WTC11 (cell line): ENCODE measurements at regions of chr2 and their contacts with region 1.

Region 1: GRCh38 chr2:234544659-234545611 is 48.1 kb upstream of the ARL4C start:
- DNase-seq: peak; percentile 88
- ATAC-seq: peak; percentile 77
- H3K4me3 Mint-ChIP-seq: peak overlapping the region; percentile 54
- H3K27ac Mint-ChIP-seq: no peak overlapping the region
- H3K4me1 Mint-ChIP-seq: peaks cover 48% of the 10 kb centered on the region
- H3K27me3 Mint-ChIP-seq: peaks cover 17% of the 10 kb centered on the region
- CTCF ChIP-seq: peak; percentile 94

Region 2: DNA sequence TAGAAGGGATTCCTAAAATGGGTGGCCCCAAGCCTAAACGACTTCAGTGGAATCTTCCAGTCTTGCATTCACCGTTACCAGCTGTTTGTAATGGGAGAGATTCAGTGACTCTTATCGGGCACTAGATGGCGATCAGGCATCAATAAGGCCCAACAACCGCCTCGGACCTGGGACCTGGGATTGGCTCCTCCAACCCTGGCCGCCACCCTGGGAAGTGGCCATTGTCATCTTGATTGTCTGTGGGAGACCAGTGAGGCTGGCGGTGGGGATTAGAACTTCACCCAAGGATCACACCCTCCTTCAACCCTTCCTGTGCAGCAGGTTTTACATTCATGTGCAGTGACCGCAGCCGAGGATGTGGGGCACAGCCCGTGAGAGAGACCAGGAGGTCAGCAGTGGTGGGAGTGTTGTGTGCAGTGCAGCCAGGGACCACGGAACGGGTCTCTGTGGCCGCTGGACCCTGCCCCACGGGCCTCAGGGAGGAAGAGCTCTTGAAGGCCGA is 409.2 kb before region 1 on chr2:
- CTCF ChIA-PET with region 1: interaction called, 15 read pairs
- POLR2A ChIA-PET with region 1: no interaction called
- DNase-seq: peak; percentile 76
- ATAC-seq: peak; percentile 98
- H3K4me3 Mint-ChIP-seq: no peak overlapping the region
- H3K27ac Mint-ChIP-seq: no peak overlapping the region
- H3K4me1 Mint-ChIP-seq: peaks cover 16% of the 10 kb centered on the region
- H3K27me3 Mint-ChIP-seq: no peaks in the 10 kb centered on the region; the same call in 1 of the 2 replicates
- CTCF ChIP-seq: peak; percentile 40

Region 3: GRCh38 chr2:234500394-234501006 is 44.4 kb before region 1 on chr2:
- CTCF ChIA-PET with region 1: interaction called, 12 read pairs
- POLR2A ChIA-PET with region 1: no interaction called
- DNase-seq: peak; percentile 46
- ATAC-seq: peak; percentile 24
- H3K4me3 Mint-ChIP-seq: no peak overlapping the region
- H3K27ac Mint-ChIP-seq: no peak overlapping the region
- H3K4me1 Mint-ChIP-seq: peaks cover 23% of the 10 kb centered on the region
- H3K27me3 Mint-ChIP-seq: peaks cover 25% of the 10 kb centered on the region
- CTCF ChIP-seq: no peak

Region 4: GRCh38 chr2:234533626-234534025 is 11.3 kb before region 1 on chr2:
- CTCF ChIA-PET with region 1: interaction called, 11 read pairs
- POLR2A ChIA-PET with region 1: no interaction called
- DNase-seq: no peak
- ATAC-seq: no peak
- H3K4me3 Mint-ChIP-seq: no peak overlapping the region
- H3K27ac Mint-ChIP-seq: no peak overlapping the region
- H3K4me1 Mint-ChIP-seq: peaks cover 19% of the 10 kb centered on the region
- H3K27me3 Mint-ChIP-seq: no peaks in the 10 kb centered on the region
- CTCF ChIP-seq: no peak

Region 5: DNA sequence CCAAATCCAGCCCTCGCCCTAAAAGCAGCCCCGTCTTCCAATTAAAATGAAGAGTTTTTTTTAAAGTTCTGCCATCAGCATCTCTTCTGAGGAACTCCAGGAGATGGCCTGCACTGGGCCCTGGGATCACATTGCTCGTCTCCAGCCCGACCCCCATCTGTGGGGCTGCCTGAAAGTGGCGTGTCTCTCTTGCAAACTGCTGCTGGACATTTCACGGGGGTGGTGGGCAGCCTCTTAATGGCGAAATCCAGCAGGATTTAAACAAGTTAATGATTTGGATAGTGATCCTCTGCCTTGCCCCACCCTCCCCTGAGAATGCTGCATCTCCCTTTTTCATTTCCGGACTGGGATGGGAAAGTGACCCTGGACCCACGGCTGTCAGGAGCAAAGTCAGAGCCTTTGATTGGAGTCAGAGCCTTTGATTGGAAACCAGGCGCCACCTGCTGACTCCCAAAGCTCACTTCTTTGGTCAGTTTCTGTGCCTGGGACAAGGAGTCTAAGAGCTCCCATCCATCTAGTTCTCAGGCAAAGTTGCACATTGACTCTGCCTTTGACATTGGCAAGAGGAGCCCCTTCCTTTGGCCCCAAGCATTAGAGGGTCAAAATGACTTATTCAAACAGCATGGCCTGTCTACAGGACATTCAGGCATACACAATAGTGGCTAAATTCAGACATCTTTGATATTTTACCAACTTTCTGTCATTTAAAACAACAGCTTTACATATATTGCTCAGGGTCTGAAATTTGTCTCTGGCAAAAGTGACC is 562.1 kb after region 1 on chr2:
- CTCF ChIA-PET with region 1: interaction called, 16 read pairs
- POLR2A ChIA-PET with region 1: no interaction called
- DNase-seq: peak; percentile 69
- ATAC-seq: peak; percentile 76
- H3K4me3 Mint-ChIP-seq: no peak overlapping the region
- H3K27ac Mint-ChIP-seq: no peak overlapping the region
- H3K4me1 Mint-ChIP-seq: peaks cover 8% of the 10 kb centered on the region
- H3K27me3 Mint-ChIP-seq: no peaks in the 10 kb centered on the region
- CTCF ChIP-seq: no peak

Region 6: DNA sequence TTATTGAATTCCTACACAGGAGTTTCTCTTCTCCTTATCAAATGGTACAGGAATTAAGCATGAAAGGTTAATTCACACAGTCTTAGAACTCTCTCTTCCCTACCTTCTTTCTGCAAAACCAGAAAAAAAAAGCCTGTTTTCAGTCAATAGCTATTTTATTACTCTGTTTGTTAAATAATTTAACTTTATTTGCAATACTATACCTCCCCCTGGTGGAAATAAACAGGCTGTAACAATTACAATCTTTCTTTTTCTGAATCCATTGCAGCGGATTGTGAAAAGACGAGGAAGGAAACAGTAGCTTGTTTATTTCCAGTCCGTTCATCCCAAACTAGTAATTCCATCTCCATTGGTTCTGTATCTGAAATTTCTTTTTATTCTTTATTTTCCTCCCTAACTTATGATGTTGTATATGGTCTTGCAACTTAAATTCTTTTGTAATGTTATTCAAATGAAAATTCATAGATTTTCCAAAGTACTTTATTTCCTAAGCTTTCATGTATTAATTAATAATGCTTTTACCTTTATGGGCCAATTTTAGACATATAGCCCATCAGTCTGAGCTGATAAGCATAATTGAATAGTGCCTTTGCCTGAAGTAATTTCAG is 572.1 kb after region 1 on chr2:
- CTCF ChIA-PET with region 1: interaction called, 16 read pairs
- POLR2A ChIA-PET with region 1: no interaction called
- DNase-seq: no peak
- ATAC-seq: no peak
- H3K4me3 Mint-ChIP-seq: no peak overlapping the region
- H3K27ac Mint-ChIP-seq: no peak overlapping the region
- H3K4me1 Mint-ChIP-seq: peaks cover 13% of the 10 kb centered on the region
- H3K27me3 Mint-ChIP-seq: peaks cover 25% of the 10 kb centered on the region
- CTCF ChIP-seq: peak; percentile 56